CD14-positive monocyte (primary cell): ENCODE measurements at regions of chr5 and their contacts with region 1.

Region 1: DNA sequence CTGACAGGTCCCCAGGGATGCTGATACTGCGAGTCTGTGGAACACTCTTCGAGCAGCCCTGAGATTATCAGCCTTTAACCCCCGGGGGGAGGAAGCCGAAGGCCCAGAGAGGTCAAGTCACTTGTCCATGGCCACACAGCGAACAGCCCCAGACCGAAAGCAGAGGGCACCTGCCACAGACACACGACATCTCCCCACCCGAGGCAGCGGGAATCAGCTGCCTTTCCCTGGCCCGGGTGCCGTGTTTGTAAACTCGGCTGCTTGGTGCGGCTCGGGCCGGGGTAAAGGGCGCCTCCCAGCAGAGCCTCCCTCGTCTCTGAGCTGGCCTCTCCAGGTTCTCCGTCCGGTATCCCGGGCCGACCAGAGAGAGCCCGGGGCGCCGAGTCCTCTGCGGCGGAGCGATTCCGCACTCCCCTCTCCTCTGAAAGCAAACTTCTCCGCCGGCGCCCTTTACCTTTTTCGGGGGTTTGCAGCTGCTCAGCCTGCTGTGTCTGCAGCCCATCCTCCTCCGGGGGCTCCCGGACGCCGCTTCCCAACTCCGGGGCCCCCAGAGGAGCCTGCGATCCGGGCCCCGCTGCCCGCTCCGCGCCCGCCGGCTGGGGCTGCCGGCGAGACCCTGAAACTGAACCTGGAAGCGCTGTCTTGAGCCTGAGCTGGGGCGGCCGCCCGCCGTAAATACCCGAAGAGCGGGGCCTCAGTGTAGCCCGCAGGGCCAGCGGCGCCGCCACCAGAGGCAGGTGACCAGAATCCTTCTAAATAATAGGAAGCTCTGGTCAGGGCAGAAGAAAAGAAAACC is at the start of gene CCDC69:
- DNase-seq: peak in 2 of 3 donors; percentile 54 to 58
- H3K4me3 ChIP-seq: peak within 1 kb of the TSS; percentile 66 to 96 (median 93)
- H3K4me3 Mint-ChIP-seq: peak within 1 kb of the TSS; percentile 90 to 96
- H3K27ac ChIP-seq: peak within 1 kb of the TSS; percentile 92 to 94
- H3K27ac Mint-ChIP-seq: peak within 1 kb of the TSS; percentile 92 to 97 (median 94)
- H3K4me1 ChIP-seq: peaks cover 53 to 73% of the 10 kb centered on the region in 2 donors
- H3K4me1 Mint-ChIP-seq: peaks cover 64% of the 10 kb centered on the region
- H3K27me3 ChIP-seq: no peaks in the 10 kb centered on the region
- H3K27me3 Mint-ChIP-seq: peaks cover 0 to 3% (median 0%) of the 10 kb centered on the region in 3 donors
- CTCF ChIP-seq: no peak
- polyA plus RNA-seq, gene CCDC69: 68.4 to 176 (median 84.1) TPM

Region 2: DNA sequence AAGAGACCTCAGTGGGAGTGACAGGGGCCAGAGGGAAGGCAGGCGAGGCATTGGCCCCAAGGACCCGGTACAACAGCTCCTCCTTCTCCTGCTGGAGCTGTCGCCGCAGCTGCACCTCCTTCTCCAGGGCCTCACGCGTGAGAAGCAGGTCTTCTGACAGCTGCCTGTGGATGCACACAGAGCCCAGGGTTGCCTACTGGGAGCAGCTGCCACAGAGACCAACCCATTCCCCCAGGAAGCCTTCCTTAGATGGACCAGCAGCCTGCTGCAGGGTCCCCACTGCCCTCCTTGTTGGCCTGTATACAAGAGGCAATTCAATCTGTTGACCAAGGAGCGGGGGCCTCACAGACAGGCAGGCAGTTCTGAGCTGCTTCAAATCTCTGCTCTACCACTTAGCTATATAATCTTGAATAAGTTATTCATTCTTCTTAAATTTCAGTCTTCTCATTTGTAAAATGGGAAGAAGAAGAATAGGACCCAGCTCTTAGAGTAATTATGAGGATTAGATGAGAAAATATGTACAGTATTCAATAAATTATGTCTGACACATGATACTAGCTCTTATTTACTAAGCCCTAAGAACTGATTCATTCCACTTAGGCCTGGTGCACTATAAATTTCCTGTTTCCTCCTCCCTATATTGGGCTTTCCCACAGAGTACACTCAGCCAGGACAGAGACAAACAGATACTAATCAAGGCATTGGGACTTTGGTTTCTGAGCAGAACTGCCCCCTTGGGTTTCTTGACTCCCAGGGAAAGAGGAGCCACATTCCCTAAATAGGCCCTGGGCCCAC is 40.0 kb before region 1 on chr5:
- intact Hi-C with region 1: no loop called
- DNase-seq: no peak
- H3K4me3 ChIP-seq: no peak overlapping the region
- H3K4me3 Mint-ChIP-seq: no peak overlapping the region
- H3K27ac ChIP-seq: no peak overlapping the region
- H3K27ac Mint-ChIP-seq: no peak overlapping the region
- H3K4me1 ChIP-seq: no peaks in the 10 kb centered on the region
- H3K4me1 Mint-ChIP-seq: peaks cover 8% of the 10 kb centered on the region
- H3K27me3 ChIP-seq: no peaks in the 10 kb centered on the region
- H3K27me3 Mint-ChIP-seq: peaks cover 0 to 2% (median 0%) of the 10 kb centered on the region in 3 donors
- CTCF ChIP-seq: no peak

Region 3: DNA sequence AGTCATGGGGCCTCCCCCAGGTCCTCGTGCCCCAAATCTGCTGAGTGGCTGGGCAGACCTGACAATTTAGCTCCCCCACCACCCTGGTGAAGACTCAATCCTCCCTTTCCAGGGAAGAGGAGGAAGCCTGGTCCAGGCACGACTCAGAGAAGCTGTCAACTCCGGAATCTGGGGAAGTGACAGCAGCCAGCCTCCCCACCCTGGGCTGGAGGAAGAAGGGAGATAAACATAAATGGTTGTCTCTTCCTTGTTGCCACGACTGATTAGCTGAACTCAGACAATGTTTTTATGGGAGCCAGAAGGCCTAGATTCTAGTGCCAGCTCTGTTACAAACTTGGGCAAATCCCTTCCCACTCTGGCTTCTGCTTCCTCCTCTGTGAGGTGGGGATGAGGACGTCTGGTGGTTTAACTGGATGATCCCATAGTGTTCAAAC is 15.2 kb before region 1 on chr5:
- intact Hi-C with region 1: loop called in 1 of 2 experiments (anchors 2 kb)
- DNase-seq: peak; percentile 44 to 81 (median 63)
- H3K4me3 ChIP-seq: peak overlapping the region in 1 of 3 experiments; percentile 55
- H3K4me3 Mint-ChIP-seq: peak overlapping the region in 1 of 2 donors; percentile 75
- H3K27ac ChIP-seq: peak overlapping the region; percentile 97
- H3K27ac Mint-ChIP-seq: peak overlapping the region; percentile 98 to 100 (median 99)
- H3K4me1 ChIP-seq: peaks cover 61% of the 10 kb centered on the region in 2 donors
- H3K4me1 Mint-ChIP-seq: peaks cover 60% of the 10 kb centered on the region
- H3K27me3 ChIP-seq: no peaks in the 10 kb centered on the region
- H3K27me3 Mint-ChIP-seq: peaks cover 0 to 2% (median 1%) of the 10 kb centered on the region in 3 donors
- CTCF ChIP-seq: no peak